ENCODE measurements at regions of chr5 and their contacts with region 1.

Region 1: DNA sequence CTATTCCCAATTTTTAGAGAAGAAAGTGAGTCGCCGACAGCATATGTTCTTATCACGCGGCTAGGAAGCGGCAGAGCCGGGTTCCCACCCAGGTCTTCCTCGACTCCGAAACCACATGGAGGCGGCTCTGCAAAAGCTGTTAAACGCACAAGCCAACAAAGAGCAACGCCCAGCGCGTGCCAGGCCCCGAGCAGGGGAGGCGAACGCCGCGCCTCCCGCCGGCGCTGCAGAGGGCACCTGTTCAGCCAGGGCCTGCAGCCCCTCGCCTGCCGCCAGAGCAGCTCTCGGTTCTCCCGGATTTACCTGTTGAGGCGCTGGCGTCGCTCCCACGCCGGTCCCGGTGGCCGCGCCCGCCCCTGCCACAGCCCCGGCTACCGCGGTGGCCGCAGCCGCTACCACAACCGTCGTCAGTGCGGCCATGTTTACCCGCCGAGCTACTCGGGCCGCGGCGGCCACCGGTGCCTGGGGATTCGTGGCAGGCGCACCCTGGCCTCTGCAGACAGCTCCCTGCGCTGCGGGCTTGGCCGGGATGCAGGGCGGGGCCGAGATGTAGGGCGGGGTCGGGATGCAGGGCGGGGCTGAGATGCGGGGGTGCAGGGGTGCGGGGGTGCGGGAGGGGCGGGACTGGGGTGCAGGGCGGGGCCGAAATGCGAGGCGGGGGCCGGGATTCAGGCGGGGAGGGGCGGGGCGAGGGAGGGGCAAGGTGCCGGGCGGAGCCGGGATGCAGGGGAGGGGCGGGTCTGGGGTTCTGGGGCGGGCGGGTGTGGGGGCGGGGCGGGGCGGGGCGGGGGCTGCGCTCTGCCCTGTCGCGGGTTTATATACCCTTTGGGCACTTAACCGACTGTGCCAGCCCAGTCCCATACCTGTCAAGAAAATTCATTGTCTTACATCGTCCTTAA is at the start of gene CCDC112:
- DNase-seq: peak; percentile 78 to 85
- H3K4me3 ChIP-seq: peak within 1 kb of the TSS; percentile 48
- H3K4me3 Mint-ChIP-seq: peak within 1 kb of the TSS; percentile 69
- H3K27ac Mint-ChIP-seq: no peak within 1 kb of the TSS
- H3K4me1 ChIP-seq: no peaks in the 10 kb centered on the region
- H3K4me1 Mint-ChIP-seq: no peaks in the 10 kb centered on the region
- H3K27me3 ChIP-seq: no peaks in the 10 kb centered on the region
- H3K27me3 Mint-ChIP-seq: peaks cover 7% of the 10 kb centered on the region
- CTCF ChIP-seq: no peak
- total RNA-seq, gene CCDC112: 2.4 and 2.9 TPM in 2 replicates

Region 2: DNA sequence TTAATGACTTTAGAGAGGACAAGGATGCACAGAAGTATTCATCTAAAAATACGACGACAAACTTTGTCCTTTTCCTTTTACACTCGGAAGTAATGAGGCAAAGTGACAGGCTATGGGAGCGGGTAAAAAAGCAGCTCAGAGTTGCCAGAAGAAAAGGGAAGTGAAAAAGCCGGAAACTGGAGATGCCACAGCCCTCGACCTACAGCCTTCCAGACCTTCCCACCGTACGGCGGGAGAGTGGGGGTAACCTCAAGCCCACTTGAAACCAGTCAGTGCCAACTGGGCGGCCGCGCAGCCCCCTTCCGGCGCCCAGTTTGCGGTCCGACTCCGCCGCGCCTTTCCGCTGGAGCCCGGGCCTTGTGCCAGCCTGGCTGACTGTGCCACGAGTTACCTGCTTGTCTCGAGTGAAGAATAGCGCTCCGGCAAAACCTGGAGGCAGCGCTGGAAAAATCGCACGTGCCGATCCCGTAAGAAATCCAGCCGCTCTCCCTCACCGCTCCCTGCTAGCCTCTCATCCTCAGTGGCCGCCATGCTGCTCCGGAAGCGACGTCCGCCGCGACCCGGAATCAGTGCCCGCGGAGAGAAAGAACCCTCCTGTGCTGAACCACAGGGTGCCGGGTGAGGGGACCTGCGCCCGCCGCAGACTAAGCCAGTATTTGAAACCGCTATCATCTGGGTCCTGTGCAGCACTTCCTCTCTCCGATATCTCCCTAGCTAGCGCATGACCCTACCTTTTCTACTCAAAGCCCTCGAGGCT is 33.9 kb before region 1 on chr5 and contains the start of gene PGGT1B:
- CTCF ChIA-PET with region 1: no interaction called
- POLR2A ChIA-PET with region 1: no interaction called
- intact Hi-C with region 1: loop called (anchors 2 kb)
- DNase-seq: peak; percentile 71 to 75
- H3K4me3 ChIP-seq: peak within 1 kb of the TSS; percentile 86
- H3K4me3 Mint-ChIP-seq: peak within 1 kb of the TSS; percentile 84
- H3K27ac Mint-ChIP-seq: peak within 1 kb of the TSS; percentile 55
- H3K4me1 ChIP-seq: peaks cover 7% of the 10 kb centered on the region; the same call in 1 of the 2 replicates
- H3K4me1 Mint-ChIP-seq: no peaks in the 10 kb centered on the region
- H3K27me3 ChIP-seq: no peaks in the 10 kb centered on the region
- H3K27me3 Mint-ChIP-seq: no peaks in the 10 kb centered on the region
- CTCF ChIP-seq: no peak
- total RNA-seq, gene PGGT1B: 38.3 and 39.4 TPM in 2 replicates

Region 3: DNA sequence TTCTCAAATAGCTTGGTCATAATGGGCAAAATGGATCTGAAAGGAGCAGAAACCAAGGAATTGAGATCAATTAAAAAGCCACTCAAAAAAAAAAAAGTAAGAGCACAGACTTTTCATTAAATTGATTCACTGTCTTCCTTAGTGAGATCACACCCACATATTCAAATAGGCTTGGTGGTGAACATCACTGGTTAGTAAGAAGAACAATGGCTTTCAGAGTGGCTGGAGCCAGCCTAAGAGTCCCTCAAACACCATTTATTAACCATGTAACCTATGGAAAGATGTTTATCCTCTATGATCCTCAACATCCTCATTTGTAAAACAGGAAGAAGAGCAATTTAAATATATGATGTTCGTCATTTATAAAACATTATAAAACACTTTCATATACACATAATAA is 12.4 kb before region 1 on chr5:
- CTCF ChIA-PET with region 1: no interaction called
- POLR2A ChIA-PET with region 1: no interaction called
- intact Hi-C with region 1: no loop called
- DNase-seq: no peak
- H3K4me3 ChIP-seq: no peak overlapping the region
- H3K4me3 Mint-ChIP-seq: no peak overlapping the region
- H3K27ac Mint-ChIP-seq: no peak overlapping the region
- H3K4me1 ChIP-seq: no peaks in the 10 kb centered on the region
- H3K4me1 Mint-ChIP-seq: peaks cover 7% of the 10 kb centered on the region
- H3K27me3 ChIP-seq: no peaks in the 10 kb centered on the region
- H3K27me3 Mint-ChIP-seq: peaks cover 7% of the 10 kb centered on the region
- CTCF ChIP-seq: no peak

Region 4: DNA sequence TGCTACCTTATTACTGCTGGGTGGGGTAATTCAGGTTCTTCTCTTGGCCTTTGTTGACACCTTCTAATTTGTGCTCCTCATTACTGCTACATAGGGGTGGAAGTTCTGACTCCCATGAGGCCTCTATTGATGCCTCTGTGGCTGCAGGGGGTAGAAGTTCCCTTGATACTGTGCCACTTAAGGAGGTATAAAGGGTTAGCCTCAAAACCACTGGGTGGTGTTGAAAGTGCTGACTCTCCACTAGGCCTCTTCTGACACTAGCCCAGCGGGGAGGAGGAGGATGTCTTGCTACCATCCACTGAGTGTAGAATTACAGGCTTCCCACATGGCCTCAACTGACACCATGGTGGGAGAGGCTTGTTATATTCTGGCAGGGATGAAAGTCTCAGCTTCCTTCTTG is 36.8 kb after region 1 on chr5:
- CTCF ChIA-PET with region 1: no interaction called
- POLR2A ChIA-PET with region 1: no interaction called
- intact Hi-C with region 1: no loop called
- DNase-seq: no peak
- H3K4me3 ChIP-seq: no peak overlapping the region
- H3K4me3 Mint-ChIP-seq: no peak overlapping the region
- H3K27ac Mint-ChIP-seq: no peak overlapping the region
- H3K4me1 ChIP-seq: peaks cover 7% of the 10 kb centered on the region
- H3K4me1 Mint-ChIP-seq: no peaks in the 10 kb centered on the region
- H3K27me3 ChIP-seq: no peaks in the 10 kb centered on the region
- H3K27me3 Mint-ChIP-seq: peaks cover 3% of the 10 kb centered on the region
- CTCF ChIP-seq: no peak

Region 5: DNA sequence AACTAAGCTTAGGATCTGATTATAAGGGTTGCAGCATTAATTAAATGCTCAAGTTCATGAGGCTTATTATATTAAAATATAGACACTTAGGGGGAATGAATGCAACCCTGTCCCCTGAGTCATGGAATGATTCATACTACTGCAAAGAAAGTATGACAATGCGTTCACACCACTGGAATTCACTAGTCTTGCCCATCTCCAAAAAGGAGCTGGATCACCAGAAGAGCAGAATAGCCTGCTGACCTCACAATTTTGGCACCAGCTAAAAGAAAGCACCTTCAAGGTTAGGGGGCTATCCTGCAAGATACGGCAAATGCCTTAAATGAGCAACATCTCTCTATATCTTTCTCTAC is 361.5 kb after region 1 on chr5:
- CTCF ChIA-PET with region 1: no interaction called
- POLR2A ChIA-PET with region 1: no interaction called
- intact Hi-C with region 1: no loop called
- DNase-seq: no peak
- H3K4me3 ChIP-seq: no peak overlapping the region
- H3K4me3 Mint-ChIP-seq: no peak overlapping the region
- H3K27ac Mint-ChIP-seq: no peak overlapping the region
- H3K4me1 ChIP-seq: no peaks in the 10 kb centered on the region
- H3K4me1 Mint-ChIP-seq: no peaks in the 10 kb centered on the region
- H3K27me3 ChIP-seq: no peaks in the 10 kb centered on the region; the same call in 1 of the 2 replicates
- H3K27me3 Mint-ChIP-seq: peaks cover 11% of the 10 kb centered on the region
- CTCF ChIP-seq: no peak